ENCODE measurements at regions of chrX and their contacts with region 1.

Region 1: GRCh38 chrX:67780694-67781109 is 236.9 kb downstream of the AR start:
- DNase-seq: peak; percentile 87

Region 2: DNA sequence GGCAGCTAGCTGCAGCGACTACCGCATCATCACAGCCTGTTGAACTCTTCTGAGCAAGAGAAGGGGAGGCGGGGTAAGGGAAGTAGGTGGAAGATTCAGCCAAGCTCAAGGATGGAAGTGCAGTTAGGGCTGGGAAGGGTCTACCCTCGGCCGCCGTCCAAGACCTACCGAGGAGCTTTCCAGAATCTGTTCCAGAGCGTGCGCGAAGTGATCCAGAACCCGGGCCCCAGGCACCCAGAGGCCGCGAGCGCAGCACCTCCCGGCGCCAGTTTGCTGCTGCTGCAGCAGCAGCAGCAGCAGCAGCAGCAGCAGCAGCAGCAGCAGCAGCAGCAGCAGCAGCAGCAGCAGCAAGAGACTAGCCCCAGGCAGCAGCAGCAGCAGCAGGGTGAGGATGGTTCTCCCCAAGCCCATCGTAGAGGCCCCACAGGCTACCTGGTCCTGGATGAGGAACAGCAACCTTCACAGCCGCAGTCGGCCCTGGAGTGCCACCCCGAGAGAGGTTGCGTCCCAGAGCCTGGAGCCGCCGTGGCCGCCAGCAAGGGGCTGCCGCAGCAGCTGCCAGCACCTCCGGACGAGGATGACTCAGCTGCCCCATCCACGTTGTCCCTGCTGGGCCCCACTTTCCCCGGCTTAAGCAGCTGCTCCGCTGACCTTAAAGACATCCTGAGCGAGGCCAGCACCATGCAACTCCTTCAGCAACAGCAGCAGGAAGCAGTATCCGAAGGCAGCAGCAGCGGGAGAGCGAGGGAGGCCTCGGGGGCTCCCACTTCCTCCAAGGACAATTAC is 235.5 kb before region 1 on chrX:
- intact Hi-C with region 1: loop called (anchors 5 kb)
- DNase-seq: peak; percentile 78

Region 3: GRCh38 chrX:68139791-68140190 is 359.1 kb after region 1 on chrX:
- intact Hi-C with region 1: no loop called
- DNase-seq: no peak

Region 4: DNA sequence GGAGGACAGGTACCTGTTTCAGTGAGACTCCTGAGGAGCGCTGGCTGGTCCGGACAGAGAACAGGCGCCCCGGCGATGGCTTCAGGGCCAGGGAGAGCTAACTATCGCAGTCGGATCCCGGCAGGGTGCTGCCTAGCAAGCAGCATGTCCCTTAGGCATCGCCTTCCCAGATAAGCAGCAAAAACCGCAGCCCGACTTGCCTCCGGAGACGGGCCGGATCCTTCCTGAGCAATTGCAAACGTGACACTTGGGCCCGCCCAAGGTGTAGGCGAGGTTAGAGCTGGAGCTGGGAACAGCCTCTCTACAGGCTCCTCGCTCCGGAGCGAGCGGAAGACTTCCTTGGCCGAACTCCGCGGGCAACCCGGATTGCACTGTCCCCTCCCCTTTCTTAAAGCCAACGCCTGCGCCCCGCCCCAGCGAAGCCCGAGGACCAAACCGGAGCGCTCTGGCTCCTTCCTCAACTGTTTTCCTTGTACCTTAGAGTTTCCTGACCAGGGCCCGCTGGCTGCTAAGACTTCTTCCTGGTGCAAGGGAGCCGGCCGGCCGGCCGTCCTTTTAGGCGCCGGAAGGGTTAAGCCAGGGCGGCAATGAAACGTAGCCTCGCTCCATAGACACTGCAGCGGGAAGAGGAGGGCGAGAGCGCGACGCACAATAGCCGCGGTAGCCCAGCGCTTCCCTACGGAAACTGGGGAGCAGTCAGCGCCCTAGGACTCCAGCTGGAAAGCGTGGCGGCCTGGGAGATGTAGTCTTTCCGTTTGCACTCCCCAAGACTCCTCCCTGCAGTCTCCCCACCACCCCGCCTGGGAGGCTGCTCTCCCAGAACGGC is 652.7 kb after region 1 on chrX and contains the start of gene OPHN1:
- intact Hi-C with region 1: loop called (anchors 5 kb)
- DNase-seq: peak; percentile 79
- total RNA-seq, gene OPHN1: 4.7 TPM

Measured in cardiac septum (tissue), 1 donor.